Natural killer cell (primary cell): ENCODE measurements at regions of chr11 and their contacts with region 1.

Region 1: GRCh38 chr11:130002846-130003716 is 446 bp upstream of the PRDM10 start:
- DNase-seq: peak; percentile 86 to 96
- ATAC-seq: peak; percentile 75 to 87 (median 75)
- H3K4me3 ChIP-seq: peak overlapping the region; percentile 65
- H3K4me3 Mint-ChIP-seq: peak overlapping the region; percentile 98
- H3K27ac ChIP-seq: peak overlapping the region; percentile 95
- H3K27ac Mint-ChIP-seq: peak overlapping the region; percentile 99 to 100
- H3K4me1 ChIP-seq: peaks cover 31% of the 10 kb centered on the region
- H3K4me1 Mint-ChIP-seq: peaks cover 33 to 37% of the 10 kb centered on the region in 2 donors
- H3K27me3 ChIP-seq: no peaks in the 10 kb centered on the region
- H3K27me3 Mint-ChIP-seq: peaks cover 0 to 4% of the 10 kb centered on the region in 2 donors
- CTCF ChIP-seq: no peak

Region 2: GRCh38 chr11:130126516-130126915 is 123.4 kb after region 1 on chr11:
- intact Hi-C with region 1: loop called (anchors 5 kb)
- DNase-seq: no peak
- ATAC-seq: no peak
- H3K4me3 ChIP-seq: no peak overlapping the region
- H3K4me3 Mint-ChIP-seq: no peak overlapping the region
- H3K27ac ChIP-seq: no peak overlapping the region
- H3K27ac Mint-ChIP-seq: peak overlapping the region in 1 of 2 donors; percentile 7
- H3K4me1 ChIP-seq: peaks cover 7% of the 10 kb centered on the region
- H3K4me1 Mint-ChIP-seq: peaks cover 24 to 28% of the 10 kb centered on the region in 2 donors
- H3K27me3 ChIP-seq: no peaks in the 10 kb centered on the region
- H3K27me3 Mint-ChIP-seq: no peaks in the 10 kb centered on the region
- CTCF ChIP-seq: no peak

Region 3: GRCh38 chr11:130314750-130315285 is 311.7 kb after region 1 on chr11 and contains the start of gene ZBTB44:
- intact Hi-C with region 1: loop called (anchors 5 kb)
- DNase-seq: peak; percentile 81 to 95
- ATAC-seq: peak; percentile 85 to 96 (median 87)
- H3K4me3 ChIP-seq: peak within 1 kb of the TSS; percentile 83
- H3K4me3 Mint-ChIP-seq: peak within 1 kb of the TSS; percentile 95
- H3K27ac ChIP-seq: peak within 1 kb of the TSS; percentile 87
- H3K27ac Mint-ChIP-seq: peak within 1 kb of the TSS; percentile 95 to 96
- H3K4me1 ChIP-seq: peaks cover 16% of the 10 kb centered on the region
- H3K4me1 Mint-ChIP-seq: peaks cover 35 to 37% of the 10 kb centered on the region in 2 donors
- H3K27me3 ChIP-seq: no peaks in the 10 kb centered on the region
- H3K27me3 Mint-ChIP-seq: no peaks in the 10 kb centered on the region
- CTCF ChIP-seq: no peak
- total RNA-seq, gene ZBTB44: 103 to 131 (median 105) TPM

Region 4: DNA sequence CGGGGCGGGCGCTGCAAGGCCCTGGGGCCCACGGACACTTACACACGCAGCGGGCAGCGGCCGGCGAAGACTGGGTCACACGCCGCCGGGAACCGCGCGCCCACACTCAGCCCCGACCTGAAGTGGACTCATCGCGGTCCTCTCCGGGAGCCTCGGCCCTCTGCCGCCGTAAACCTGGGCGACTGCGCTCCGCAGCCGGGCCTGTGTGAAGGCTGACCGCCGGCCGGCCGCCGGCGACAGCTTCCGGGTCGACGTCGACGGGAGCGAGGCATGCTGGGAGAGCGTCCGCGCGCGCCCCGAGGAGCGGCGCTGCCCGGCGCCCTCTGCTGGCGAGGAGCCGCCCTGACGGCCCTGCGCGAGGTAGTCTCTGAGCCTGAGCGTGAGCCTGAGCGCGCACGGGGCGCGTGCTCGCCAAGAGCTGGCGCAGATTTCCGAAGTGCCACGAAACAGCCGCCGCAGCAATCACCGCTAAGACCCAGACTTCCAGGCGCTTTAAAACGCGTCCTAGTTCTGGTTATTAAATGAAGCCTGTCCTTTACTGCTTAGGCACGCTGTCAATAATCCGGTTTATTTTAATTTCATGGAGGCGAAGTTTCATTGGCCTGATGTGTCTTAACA is 913.3 kb after region 1 on chr11 and contains the start of gene SNX19:
- intact Hi-C with region 1: loop called (anchors 10 kb)
- DNase-seq: peak; percentile 95 to 96
- ATAC-seq: peak; percentile 99 to 100 (median 99)
- H3K4me3 ChIP-seq: peak within 1 kb of the TSS; percentile 66
- H3K4me3 Mint-ChIP-seq: peak within 1 kb of the TSS; percentile 94
- H3K27ac ChIP-seq: peak within 1 kb of the TSS; percentile 89
- H3K27ac Mint-ChIP-seq: peak within 1 kb of the TSS; percentile 86 to 90
- H3K4me1 ChIP-seq: peaks cover 18% of the 10 kb centered on the region
- H3K4me1 Mint-ChIP-seq: peaks cover 15 to 25% of the 10 kb centered on the region in 2 donors
- H3K27me3 ChIP-seq: no peaks in the 10 kb centered on the region
- H3K27me3 Mint-ChIP-seq: peaks cover 16 to 37% of the 10 kb centered on the region in 2 donors
- CTCF ChIP-seq: peak; percentile 95
- total RNA-seq, gene SNX19: 65.4 to 76.6 (median 72.0) TPM